Sciatic nerve (tissue), 2 donors: ENCODE measurements at regions of chr2 and their contacts with region 1.

Region 1: GRCh38 chr2:230405824-230406223 is 10.2 kb upstream of the SP100 start:
- DNase-seq: no peak
- ATAC-seq: no peak

Region 2: DNA sequence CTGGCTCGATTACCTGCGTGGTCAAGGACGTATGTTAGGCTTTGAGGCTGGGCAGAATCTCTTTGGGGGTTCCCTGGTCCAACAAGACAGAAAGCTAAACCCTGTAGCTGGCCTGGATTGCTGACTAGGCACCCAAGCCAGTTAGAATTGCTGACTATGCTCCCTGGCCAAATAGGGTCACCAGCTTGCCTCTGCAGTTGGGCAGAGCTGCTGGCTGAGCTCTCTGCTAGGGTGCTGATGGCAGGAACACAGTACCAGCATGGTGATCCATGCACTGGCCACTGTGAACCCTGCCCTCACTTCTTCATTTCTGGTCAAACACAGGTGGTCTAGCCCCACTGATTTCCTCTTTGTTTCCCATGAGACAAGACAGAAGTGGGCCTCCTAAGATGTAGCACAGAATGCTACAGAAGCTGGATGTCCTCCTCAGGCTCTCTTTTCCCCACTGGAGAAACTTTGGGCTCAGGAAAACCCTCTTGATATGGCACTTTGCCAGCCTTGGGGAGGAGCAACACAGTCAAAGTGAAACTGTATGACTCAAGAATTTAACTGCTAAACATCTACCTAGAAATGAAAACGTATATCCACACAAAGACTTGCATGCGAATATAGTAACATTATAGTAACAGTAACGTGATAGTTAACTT is 58.0 kb before region 1 on chr2:
- intact Hi-C with region 1: no loop called
- DNase-seq: no peak
- ATAC-seq: peak; percentile 49

Region 3: GRCh38 chr2:230418341-230419016 is 12.7 kb after region 1 on chr2:
- intact Hi-C with region 1: no loop called
- DNase-seq: no peak
- ATAC-seq: no peak

Region 4: GRCh38 chr2:230455005-230455684 is 49.3 kb after region 1 on chr2:
- intact Hi-C with region 1: loop called (anchors 2 kb)
- DNase-seq: no peak
- ATAC-seq: no peak